ENCODE measurements at regions of chr3 and their contacts with region 1.

Region 1: GRCh38 chr3:40452876-40453730 is 4.0 kb upstream of the RPL14 start:
- DNase-seq: peak; percentile 90 to 96
- H3K4me3 ChIP-seq: peak overlapping the region; percentile 75 to 91 (median 82)
- H3K27ac ChIP-seq: peak overlapping the region; percentile 94
- H3K4me1 ChIP-seq: peaks cover 0 to 3% (median 0%) of the 10 kb centered on the region in 4 experiments; a peak in 1 of 7 replicates
- H3K27me3 ChIP-seq: no peaks in the 10 kb centered on the region
- CTCF ChIP-seq: peak in 1 of 3 experiments; percentile 4; a peak in 2 of 4 replicates
- EP300 ChIP-seq: no peak
- POLR2A ChIP-seq: peak; percentile 80 to 86
- RAD21 ChIP-seq: peak; percentile 33 to 49

Region 2: GRCh38 chr3:40387001-40387894 is 65.9 kb before region 1 on chr3 and contains the start of gene ENTPD3:
- CTCF ChIA-PET with region 1: no interaction called
- POLR2A ChIA-PET with region 1: interaction called, 17 read pairs
- DNase-seq: peak; percentile 36 to 77
- H3K4me3 ChIP-seq: peak within 1 kb of the TSS; percentile 58 to 64 (median 60)
- H3K27ac ChIP-seq: no peak within 1 kb of the TSS
- H3K4me1 ChIP-seq: peaks cover 3 to 8% (median 4%) of the 10 kb centered on the region in 4 experiments
- H3K27me3 ChIP-seq: peaks cover 3 to 30% (median 26%) of the 10 kb centered on the region in 4 experiments
- CTCF ChIP-seq: no peak
- EP300 ChIP-seq: no peak
- POLR2A ChIP-seq: no peak
- RAD21 ChIP-seq: 0 out of 4 replicates have a peak, but pooled peaks of 1 of the 2 experiments have one; percentile 11
- total RNA-seq, gene ENTPD3: 0.44 and 0.60 TPM in 2 replicates

Region 3: DNA sequence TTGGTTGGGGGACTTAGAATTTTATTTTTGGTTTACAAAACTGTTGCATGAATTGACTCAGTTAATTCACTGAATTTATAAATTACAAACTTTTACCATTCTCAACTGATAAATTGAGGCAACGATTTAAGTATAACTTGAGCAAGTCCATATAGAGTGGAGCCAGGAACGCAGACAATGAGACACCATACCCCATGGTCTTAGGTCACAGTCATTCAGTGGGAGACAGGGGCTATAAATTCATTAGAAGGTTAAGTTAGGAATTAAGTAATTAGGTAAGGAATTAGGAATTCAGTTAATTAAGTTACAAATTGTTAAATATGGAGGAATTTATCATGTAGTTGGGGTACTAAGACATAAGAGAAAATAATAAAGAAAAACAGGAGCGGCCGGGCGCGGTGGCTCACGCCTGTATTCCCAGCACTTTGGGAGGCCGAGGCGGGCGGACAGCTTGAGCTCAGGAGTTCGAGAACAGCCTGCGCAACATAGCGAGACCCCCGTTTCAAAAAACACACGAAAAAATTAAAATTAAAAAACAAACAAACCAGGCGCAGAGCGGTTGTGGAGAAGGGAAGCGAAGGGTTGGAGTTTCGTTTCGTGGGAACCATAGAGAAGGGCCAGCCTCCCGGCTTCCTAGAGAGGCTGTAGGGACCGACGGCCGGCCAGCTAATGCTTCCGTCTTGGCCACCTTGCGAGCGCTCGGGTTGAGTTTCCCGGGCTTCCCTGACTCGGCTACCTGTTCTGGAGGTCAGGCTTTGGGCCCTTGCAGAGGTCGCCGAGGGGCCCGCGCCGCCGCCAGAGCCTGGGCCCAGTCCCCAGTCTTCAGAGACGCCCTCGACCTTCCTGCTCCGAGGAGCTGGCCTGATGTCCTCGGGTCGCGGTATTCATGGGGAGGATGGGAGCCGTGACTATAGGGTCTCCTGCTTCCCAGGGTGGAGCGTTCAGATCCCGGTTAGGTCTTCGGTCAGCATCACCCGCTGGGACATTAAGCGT is 23.7 kb after region 1 on chr3 and contains the start of gene ZNF619:
- CTCF ChIA-PET with region 1: no interaction called
- POLR2A ChIA-PET with region 1: interaction called, 64 read pairs
- DNase-seq: peak in 1 of 2 experiments; percentile 80
- H3K4me3 ChIP-seq: peak within 1 kb of the TSS; percentile 36 to 88 (median 64)
- H3K27ac ChIP-seq: peak within 1 kb of the TSS; percentile 67; the same call in 1 of the 2 replicates
- H3K4me1 ChIP-seq: peaks cover 0 to 8% (median 3%) of the 10 kb centered on the region in 4 experiments; a peak in 2 of 7 replicates
- H3K27me3 ChIP-seq: no peaks in the 10 kb centered on the region
- CTCF ChIP-seq: no peak
- EP300 ChIP-seq: no peak
- POLR2A ChIP-seq: peak in 1 of 2 experiments; percentile 60; a peak in 2 of 3 replicates
- RAD21 ChIP-seq: no peak
- total RNA-seq, gene ZNF619: 7.0 and 8.2 TPM in 2 replicates

Region 4: DNA sequence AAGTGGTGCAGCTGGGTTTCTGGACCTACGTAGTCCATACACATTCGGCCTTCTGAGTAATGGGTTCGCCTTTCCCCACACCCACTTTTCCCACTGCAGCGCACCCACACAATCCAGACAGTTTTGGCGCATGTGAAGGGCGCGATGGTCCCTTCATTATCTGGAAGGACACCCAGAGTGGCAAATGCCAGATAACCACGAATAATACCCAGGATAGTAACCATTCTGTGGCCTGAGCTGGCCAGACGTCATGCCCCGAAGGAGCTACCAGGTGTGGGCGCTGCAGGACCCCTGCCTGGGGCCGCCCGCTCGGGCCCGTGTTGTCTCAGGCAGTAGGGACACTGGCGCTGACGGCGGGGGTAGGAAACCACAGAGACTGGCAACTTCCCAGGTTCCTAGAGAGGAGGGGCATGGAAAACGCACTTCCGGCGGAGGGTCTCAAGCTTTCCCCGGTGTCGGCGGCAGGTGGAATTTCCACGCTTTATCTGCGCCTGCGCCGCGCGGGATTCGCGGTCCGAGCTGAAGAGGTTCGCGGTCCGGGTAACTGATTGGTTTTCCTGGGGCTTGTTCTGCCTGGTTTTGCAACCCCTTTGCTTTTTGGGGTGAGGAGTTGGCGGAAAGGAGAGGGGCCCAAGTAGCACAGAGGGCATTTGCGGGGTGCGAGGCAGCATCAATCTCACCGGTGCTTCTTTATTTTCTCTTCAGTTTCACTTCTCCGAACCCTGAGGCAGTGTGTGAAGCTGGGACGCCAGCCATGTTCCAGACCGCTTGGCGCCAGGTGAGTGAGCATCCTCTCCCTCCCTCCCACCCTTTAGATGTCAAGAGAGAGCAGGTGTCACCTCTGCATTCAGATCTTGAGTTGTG is 52.7 kb after region 1 on chr3 and contains the start of gene ZNF620:
- CTCF ChIA-PET with region 1: interaction called, 7 read pairs
- POLR2A ChIA-PET with region 1: interaction called, 23 read pairs
- DNase-seq: peak; percentile 75 to 90
- H3K4me3 ChIP-seq: peak within 1 kb of the TSS; percentile 83 to 95 (median 88)
- H3K27ac ChIP-seq: peak within 1 kb of the TSS; percentile 73; the same call in 1 of the 2 replicates
- H3K4me1 ChIP-seq: no peaks in the 10 kb centered on the region; a peak in 2 of 7 replicates
- H3K27me3 ChIP-seq: no peaks in the 10 kb centered on the region
- CTCF ChIP-seq: peak; percentile 32 to 47 (median 45)
- EP300 ChIP-seq: 0 out of 3 replicates have a peak, but pooled peaks of 1 of the 2 experiments have one; percentile 50
- POLR2A ChIP-seq: peak; percentile 46 to 77; a peak in 2 of 3 replicates
- RAD21 ChIP-seq: peak; percentile 45 to 52
- total RNA-seq, gene ZNF620: 20.2 and 21.4 TPM in 2 replicates

Measured in H1 (cell line).